PC-3 (cell line): ENCODE measurements at regions of chr10 and their contacts with region 1.

Region 1: GRCh38 chr10:70381471-70382421 is 679 bp downstream of the LRRC20 start:
- DNase-seq: peak; percentile 57
- ATAC-seq: peak; percentile 21
- H3K4me3 ChIP-seq: peak overlapping the region; percentile 76
- H3K27ac ChIP-seq: no peak overlapping the region
- H3K4me1 ChIP-seq: peaks cover 28% of the 10 kb centered on the region
- H3K27me3 ChIP-seq: no peaks in the 10 kb centered on the region
- CTCF ChIP-seq: no peak

Region 2: GRCh38 chr10:70267161-70267933 is 114.4 kb before region 1 on chr10:
- CTCF ChIA-PET with region 1: interaction called, 22 read pairs
- POLR2A ChIA-PET with region 1: no interaction called
- intact Hi-C with region 1: no loop called
- DNase-seq: peak; percentile 99
- ATAC-seq: peak; percentile 97
- H3K4me3 ChIP-seq: no peak overlapping the region
- H3K27ac ChIP-seq: no peak overlapping the region
- H3K4me1 ChIP-seq: peaks cover 16% of the 10 kb centered on the region
- H3K27me3 ChIP-seq: no peaks in the 10 kb centered on the region
- CTCF ChIP-seq: peak; percentile 51

Region 3: GRCh38 chr10:70404036-70404786 is 22.5 kb after region 1 on chr10 and contains the start of gene EIF4EBP2:
- CTCF ChIA-PET with region 1: interaction called, 36 read pairs
- POLR2A ChIA-PET with region 1: interaction called, 18 read pairs
- intact Hi-C with region 1: loop called (anchors 1 kb)
- DNase-seq: peak; percentile 99
- ATAC-seq: peak; percentile 31
- H3K4me3 ChIP-seq: peak within 1 kb of the TSS; percentile 75
- H3K27ac ChIP-seq: peak within 1 kb of the TSS; percentile 18
- H3K4me1 ChIP-seq: peaks cover 24% of the 10 kb centered on the region
- H3K27me3 ChIP-seq: no peaks in the 10 kb centered on the region
- CTCF ChIP-seq: no peak
- total RNA-seq, gene EIF4EBP2: 29.2 and 32.6 TPM in 2 replicates

Region 4: GRCh38 chr10:70480239-70480861 is 98.6 kb after region 1 on chr10:
- CTCF ChIA-PET with region 1: no interaction called
- POLR2A ChIA-PET with region 1: interaction called, 10 read pairs
- intact Hi-C with region 1: no loop called
- DNase-seq: no peak
- ATAC-seq: no peak
- H3K4me3 ChIP-seq: no peak overlapping the region
- H3K27ac ChIP-seq: no peak overlapping the region
- H3K4me1 ChIP-seq: peaks cover 22% of the 10 kb centered on the region
- H3K27me3 ChIP-seq: peaks cover 20% of the 10 kb centered on the region
- CTCF ChIP-seq: no peak